ENCODE measurements at regions of chr19 and their contacts with region 1.

Region 1: GRCh38 chr19:10403137-10404021 is at the start of gene CDC37:
- DNase-seq: peak; percentile 94
- H3K4me3 ChIP-seq: peak within 1 kb of the TSS; percentile 85 to 94 (median 92)
- H3K27ac ChIP-seq: peak within 1 kb of the TSS; percentile 84
- H3K4me1 ChIP-seq: peaks cover 24% of the 10 kb centered on the region
- H3K27me3 ChIP-seq: peaks cover 3% of the 10 kb centered on the region
- CTCF ChIP-seq: no peak
- total RNA-seq, gene CDC37: 114 to 217 TPM

Region 2: DNA sequence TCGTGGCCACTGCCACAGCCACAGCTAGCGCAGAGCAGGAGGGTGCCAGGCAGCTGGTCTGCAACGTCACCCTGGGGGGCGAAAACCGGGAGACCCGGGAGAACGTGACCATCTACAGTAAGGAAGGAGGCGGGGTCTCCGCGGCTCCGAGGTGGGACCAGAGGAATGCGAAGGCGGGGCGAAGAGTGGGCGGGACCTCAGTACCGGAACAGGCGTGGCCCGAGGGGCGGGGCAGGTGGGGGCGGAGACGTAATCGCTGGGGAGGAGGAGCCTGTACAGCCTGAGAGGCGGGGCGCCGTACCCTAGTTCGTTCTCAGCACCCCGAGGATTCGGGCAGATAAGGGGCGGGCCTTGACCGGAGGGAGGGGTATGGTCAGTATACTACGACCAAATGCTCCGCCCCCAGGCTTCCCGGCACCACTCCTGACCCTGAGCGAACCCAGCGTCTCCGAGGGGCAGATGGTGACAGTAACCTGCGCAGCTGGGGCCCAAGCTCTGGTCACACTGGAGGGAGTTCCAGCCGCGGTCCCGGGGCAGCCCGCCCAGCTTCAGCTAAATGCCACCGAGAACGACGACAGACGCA is 111.1 kb before region 1 on chr19:
- CTCF ChIA-PET with region 1: no interaction called
- dilution Hi-C with region 1: loop called (anchors 5 kb)
- in situ Hi-C with region 1: no loop called
- intact Hi-C with region 1: no loop called
- DNase-seq: peak; percentile 36
- H3K4me3 ChIP-seq: peak overlapping the region; percentile 45 to 51 (median 50)
- H3K27ac ChIP-seq: no peak overlapping the region
- H3K4me1 ChIP-seq: peaks cover 31% of the 10 kb centered on the region
- H3K27me3 ChIP-seq: no peaks in the 10 kb centered on the region
- CTCF ChIP-seq: no peak

Region 3: GRCh38 chr19:10416380-10417257 is 13.2 kb after region 1 on chr19:
- CTCF ChIA-PET with region 1: interaction called, 4 read pairs
- dilution Hi-C with region 1: no loop called
- in situ Hi-C with region 1: no loop called
- intact Hi-C with region 1: loop called (anchors 1 kb)
- DNase-seq: peak; percentile 80
- H3K4me3 ChIP-seq: peak overlapping the region; percentile 53 to 58 (median 55)
- H3K27ac ChIP-seq: no peak overlapping the region
- H3K4me1 ChIP-seq: peaks cover 29% of the 10 kb centered on the region
- H3K27me3 ChIP-seq: peaks cover 34% of the 10 kb centered on the region
- CTCF ChIP-seq: peak; percentile 67 to 77

Region 4: DNA sequence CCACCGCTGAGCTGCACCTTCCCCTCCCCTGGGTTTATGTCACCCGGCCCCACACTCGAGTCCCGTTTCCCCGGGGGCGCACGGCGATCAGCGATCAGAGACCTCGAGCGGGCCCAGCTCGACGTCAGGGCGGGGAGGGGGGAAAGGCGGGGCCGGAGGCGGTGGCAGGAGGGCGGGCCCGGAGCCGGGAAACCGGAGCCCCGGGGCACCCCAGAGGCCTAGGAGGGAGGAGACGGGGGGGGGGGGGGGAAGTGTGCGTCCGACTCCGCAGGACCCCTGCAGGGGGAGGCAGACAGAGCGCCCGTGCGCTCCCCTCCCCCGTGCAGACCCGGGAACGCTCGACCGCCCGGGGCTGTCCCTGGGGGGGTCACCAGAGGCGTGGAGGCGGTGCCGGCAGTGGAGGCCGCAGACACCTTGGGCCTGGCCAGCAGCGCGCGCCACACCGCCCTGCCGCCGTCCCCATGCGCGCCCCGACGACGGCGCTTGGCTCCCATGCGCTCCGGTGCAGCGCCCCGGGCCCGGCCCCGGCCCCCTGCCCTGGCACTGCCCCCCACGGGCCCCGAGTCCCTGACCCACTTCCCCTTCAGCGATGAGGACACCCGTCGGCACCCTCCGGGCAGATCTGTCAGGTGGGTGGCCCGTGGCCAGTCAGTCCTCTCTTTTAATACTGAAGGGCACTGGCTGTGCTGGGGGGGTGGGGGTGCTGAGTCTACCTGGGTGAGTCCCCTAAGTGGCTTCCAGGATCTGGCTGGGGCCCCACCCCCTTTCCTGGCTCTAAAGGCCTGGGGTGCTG is 28.8 kb after region 1 on chr19:
- CTCF ChIA-PET with region 1: no interaction called
- dilution Hi-C with region 1: no loop called
- in situ Hi-C with region 1: no loop called
- intact Hi-C with region 1: loop called (anchors 1 kb)
- DNase-seq: no peak
- H3K4me3 ChIP-seq: no peak overlapping the region
- H3K27ac ChIP-seq: no peak overlapping the region
- H3K4me1 ChIP-seq: peaks cover 10% of the 10 kb centered on the region
- H3K27me3 ChIP-seq: peaks cover 6% of the 10 kb centered on the region
- CTCF ChIP-seq: no peak

Region 5: DNA sequence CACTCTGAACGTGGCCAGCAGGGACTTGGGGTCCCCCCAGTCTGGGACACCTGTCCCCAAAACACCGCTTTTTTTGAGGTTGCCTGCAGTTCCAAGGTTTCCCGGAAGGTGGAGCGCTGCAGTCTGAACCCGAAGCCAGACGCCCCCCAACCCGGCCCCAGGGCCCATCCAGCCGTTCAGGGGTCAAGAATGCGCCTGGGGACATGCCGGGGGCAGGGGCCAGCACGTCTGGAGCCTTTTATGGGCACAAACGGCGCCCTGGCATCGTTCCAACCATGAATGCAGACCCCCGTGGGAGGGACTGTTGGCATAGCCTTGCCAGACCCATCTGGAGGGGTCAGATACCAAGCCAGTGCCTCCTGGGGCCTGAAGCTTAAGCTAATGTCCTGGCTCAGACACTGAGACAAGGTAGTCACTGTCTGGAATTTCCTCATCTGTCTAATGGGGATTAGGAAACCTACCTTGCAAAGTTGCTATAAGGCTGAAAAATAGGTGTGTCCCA is 107.0 kb after region 1 on chr19:
- CTCF ChIA-PET with region 1: interaction called, 4 read pairs
- dilution Hi-C with region 1: loop called (anchors 10 kb)
- in situ Hi-C with region 1: no loop called
- intact Hi-C with region 1: no loop called
- DNase-seq: peak; percentile 72
- H3K4me3 ChIP-seq: no peak overlapping the region
- H3K27ac ChIP-seq: no peak overlapping the region
- H3K4me1 ChIP-seq: peaks cover 14% of the 10 kb centered on the region
- H3K27me3 ChIP-seq: no peaks in the 10 kb centered on the region
- CTCF ChIP-seq: peak; percentile 46 to 73

Region 6: GRCh38 chr19:10565567-10566407 is 162.4 kb after region 1 on chr19 and contains the start of gene KRI1:
- CTCF ChIA-PET with region 1: no interaction called
- dilution Hi-C with region 1: no loop called
- in situ Hi-C with region 1: no loop called
- intact Hi-C with region 1: loop called (anchors 5 kb)
- DNase-seq: peak; percentile 94
- H3K4me3 ChIP-seq: peak within 1 kb of the TSS; percentile 90 to 95 (median 92)
- H3K27ac ChIP-seq: peak within 1 kb of the TSS; percentile 53
- H3K4me1 ChIP-seq: peaks cover 39% of the 10 kb centered on the region
- H3K27me3 ChIP-seq: no peaks in the 10 kb centered on the region
- CTCF ChIP-seq: peak; percentile 16 to 42
- total RNA-seq, gene KRI1: 10.3 to 32.7 TPM

Region 7: DNA sequence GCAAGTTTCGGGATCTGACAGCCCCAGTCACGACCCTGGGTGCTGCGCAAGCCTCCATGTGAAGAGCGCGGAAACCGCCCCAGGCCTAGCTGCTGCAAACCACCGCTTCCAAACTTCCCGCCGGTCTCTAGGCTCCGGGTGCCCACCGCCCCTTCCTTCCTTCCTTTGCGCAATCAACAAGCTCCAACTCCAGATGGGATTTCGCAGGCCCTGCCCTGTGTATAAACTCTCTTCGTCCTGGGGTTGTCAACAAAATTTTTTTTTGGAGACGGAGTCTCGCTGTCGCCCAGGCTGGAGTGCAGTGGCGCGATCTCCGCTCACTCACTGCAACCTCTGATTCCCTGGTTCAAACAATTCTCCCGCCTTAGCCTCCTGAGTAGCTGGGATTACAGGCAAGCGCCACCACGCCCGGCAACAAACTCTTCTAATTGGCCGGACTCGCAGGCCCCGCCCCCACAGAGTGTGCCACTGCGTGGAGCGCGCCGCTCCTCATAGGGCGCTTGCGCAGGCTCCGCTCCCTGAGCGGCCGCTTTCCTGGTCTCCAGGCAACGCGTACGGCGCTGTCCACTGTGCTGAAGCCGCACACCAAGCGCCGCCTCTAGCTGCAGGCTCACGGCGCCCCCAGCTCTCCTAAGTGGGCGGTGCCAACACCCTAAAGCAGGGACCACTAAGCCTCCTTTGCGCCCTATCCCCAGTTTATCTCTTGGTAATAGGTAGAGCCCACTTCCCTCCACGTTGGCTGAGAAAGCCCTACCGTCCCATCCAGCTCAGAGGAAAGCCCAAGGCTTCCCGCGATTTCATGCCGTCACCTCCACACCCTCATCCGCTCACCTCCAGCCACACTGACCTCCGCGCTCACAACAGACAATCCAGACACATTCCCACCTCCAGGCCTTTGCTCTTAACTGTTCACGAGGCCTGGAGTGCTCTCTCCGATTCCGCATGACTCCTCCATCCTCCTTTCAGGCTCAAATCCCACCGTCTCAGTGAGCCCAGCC is 292.3 kb after region 1 on chr19:
- CTCF ChIA-PET with region 1: no interaction called
- dilution Hi-C with region 1: no loop called
- in situ Hi-C with region 1: no loop called
- intact Hi-C with region 1: loop called (anchors 1 kb)
- DNase-seq: peak; percentile 93
- H3K4me3 ChIP-seq: no peak overlapping the region
- H3K27ac ChIP-seq: no peak overlapping the region
- H3K4me1 ChIP-seq: no peaks in the 10 kb centered on the region
- H3K27me3 ChIP-seq: no peaks in the 10 kb centered on the region
- CTCF ChIP-seq: no peak

Measured in mammary epithelial cell (primary cell).